ENCODE measurements at regions of chr3 and their contacts with region 1.

Region 1: DNA sequence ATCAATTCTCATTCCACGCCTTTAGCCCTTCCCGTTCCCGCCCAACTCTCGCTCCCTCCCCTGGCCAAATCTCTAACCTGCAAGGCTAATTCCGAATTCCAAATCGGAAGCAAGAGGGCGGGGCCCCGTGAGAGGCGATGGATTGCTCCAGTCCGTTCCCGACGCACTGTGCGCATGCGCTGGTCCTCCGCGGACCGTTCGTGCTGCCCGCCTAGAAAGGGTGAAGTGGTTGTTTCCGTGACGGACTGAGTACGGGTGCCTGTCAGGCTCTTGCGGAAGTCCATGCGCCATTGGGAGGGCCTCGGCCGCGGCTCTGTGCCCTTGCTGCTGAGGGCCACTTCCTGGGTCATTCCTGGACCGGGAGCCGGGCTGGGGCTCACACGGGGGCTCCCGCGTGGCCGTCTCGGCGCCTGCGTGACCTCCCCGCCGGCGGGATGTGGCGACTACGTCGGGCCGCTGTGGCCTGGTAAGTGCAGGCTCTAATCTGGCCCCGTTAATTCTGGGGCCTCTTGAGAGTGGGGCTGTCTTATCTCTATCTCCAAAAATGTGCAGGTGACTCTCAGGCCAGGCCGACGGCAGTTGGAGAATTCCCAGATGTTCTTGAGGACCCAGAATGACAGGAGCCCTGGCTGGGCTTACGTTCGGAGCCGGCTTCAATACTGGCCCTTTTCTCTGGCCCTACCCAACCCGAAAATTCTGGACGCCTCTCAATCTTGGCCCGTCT is at the start of gene OPA1:
- DNase-seq: peak; percentile 73 to 91 (median 80)
- ATAC-seq: peak; percentile 96
- H3K4me3 ChIP-seq: peak within 1 kb of the TSS; percentile 78
- H3K4me3 Mint-ChIP-seq: peak within 1 kb of the TSS; percentile 93 to 98 (median 96)
- H3K27ac ChIP-seq: peak within 1 kb of the TSS; percentile 82
- H3K27ac Mint-ChIP-seq: peak within 1 kb of the TSS; percentile 92 to 98 (median 95)
- H3K4me1 ChIP-seq: peaks cover 18 to 20% of the 10 kb centered on the region in 2 donors
- H3K4me1 Mint-ChIP-seq: peaks cover 40 to 70% (median 59%) of the 10 kb centered on the region in 7 donors
- H3K27me3 ChIP-seq: no peaks in the 10 kb centered on the region
- H3K27me3 Mint-ChIP-seq: no peaks in the 10 kb centered on the region
- total RNA-seq, gene OPA1: 50.7 to 70.0 (median 59.4) TPM

Region 2: GRCh38 chr3:193605876-193606275 is 12.8 kb after region 1 on chr3:
- CTCF ChIA-PET with region 1: interaction called, 3 read pairs
- POLR2A ChIA-PET with region 1: interaction called, 3 read pairs
- intact Hi-C with region 1: loop called (anchors 1 kb)
- DNase-seq: peak in 8 of 9 donors; percentile 17 to 56 (median 46)
- ATAC-seq: peak; percentile 85
- H3K4me3 ChIP-seq: no peak overlapping the region
- H3K4me3 Mint-ChIP-seq: no peak overlapping the region
- H3K27ac ChIP-seq: no peak overlapping the region
- H3K27ac Mint-ChIP-seq: peak overlapping the region in 1 of 9 donors; percentile 8
- H3K4me1 ChIP-seq: peaks cover 0 to 6% of the 10 kb centered on the region in 2 donors
- H3K4me1 Mint-ChIP-seq: peaks cover 9 to 63% (median 51%) of the 10 kb centered on the region in 7 donors
- H3K27me3 ChIP-seq: no peaks in the 10 kb centered on the region
- H3K27me3 Mint-ChIP-seq: no peaks in the 10 kb centered on the region

Region 3: GRCh38 chr3:194486540-194487288 is 893.6 kb after region 1 on chr3 and contains the start of gene ATP13A3:
- CTCF ChIA-PET with region 1: no interaction called
- POLR2A ChIA-PET with region 1: no interaction called
- intact Hi-C with region 1: loop called in 1 of 2 experiments (anchors 5 kb)
- DNase-seq: peak; percentile 84 to 93 (median 91)
- ATAC-seq: peak; percentile 93
- H3K4me3 ChIP-seq: peak within 1 kb of the TSS; percentile 83
- H3K4me3 Mint-ChIP-seq: peak within 1 kb of the TSS; percentile 83 to 98 (median 93)
- H3K27ac ChIP-seq: peak within 1 kb of the TSS; percentile 82
- H3K27ac Mint-ChIP-seq: peak within 1 kb of the TSS; percentile 82 to 96 (median 94)
- H3K4me1 ChIP-seq: peaks cover 20 to 25% of the 10 kb centered on the region in 2 donors
- H3K4me1 Mint-ChIP-seq: peaks cover 41 to 60% (median 45%) of the 10 kb centered on the region in 7 donors
- H3K27me3 ChIP-seq: no peaks in the 10 kb centered on the region
- H3K27me3 Mint-ChIP-seq: no peaks in the 10 kb centered on the region
- total RNA-seq, gene ATP13A3: 46.5 to 81.8 (median 58.4) TPM